HAP-1 (cell line): ENCODE measurements at regions of chr1 and their contacts with region 1.

Region 1: GRCh38 chr1:102191723-102192122 is 195.0 kb upstream of the OLFM3 start:
- DNase-seq: peak; percentile 67 to 80
- H3K4me3 ChIP-seq: no peak overlapping the region
- H3K4me1 ChIP-seq: no peaks in the 10 kb centered on the region
- H3K27me3 ChIP-seq: no peaks in the 10 kb centered on the region; the same call in 1 of the 2 replicates

Region 2: DNA sequence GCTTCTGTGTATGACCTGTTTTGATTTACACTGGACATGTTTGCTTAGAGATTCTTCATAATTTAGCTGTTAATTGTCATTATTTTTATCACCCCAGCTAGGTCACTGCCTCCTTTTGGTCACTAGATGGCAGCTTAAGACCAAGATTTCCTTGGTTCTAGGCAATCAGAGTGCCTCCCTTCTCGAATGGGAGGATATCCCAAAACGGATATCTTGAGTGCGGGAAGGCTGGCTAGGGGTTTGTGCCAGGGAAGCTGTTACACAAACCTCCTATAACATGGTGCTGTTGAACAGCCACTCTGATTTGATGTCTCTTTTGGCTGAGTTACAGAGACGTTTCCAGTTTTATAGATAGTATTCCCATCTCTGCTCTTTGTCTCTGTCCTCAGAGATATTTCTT is 671.4 kb before region 1 on chr1:
- in situ Hi-C with region 1: loop called (anchors 25 kb)
- DNase-seq: peak; percentile 60 to 62
- H3K4me3 ChIP-seq: no peak overlapping the region
- H3K4me1 ChIP-seq: no peaks in the 10 kb centered on the region
- H3K27me3 ChIP-seq: no peaks in the 10 kb centered on the region

Region 3: DNA sequence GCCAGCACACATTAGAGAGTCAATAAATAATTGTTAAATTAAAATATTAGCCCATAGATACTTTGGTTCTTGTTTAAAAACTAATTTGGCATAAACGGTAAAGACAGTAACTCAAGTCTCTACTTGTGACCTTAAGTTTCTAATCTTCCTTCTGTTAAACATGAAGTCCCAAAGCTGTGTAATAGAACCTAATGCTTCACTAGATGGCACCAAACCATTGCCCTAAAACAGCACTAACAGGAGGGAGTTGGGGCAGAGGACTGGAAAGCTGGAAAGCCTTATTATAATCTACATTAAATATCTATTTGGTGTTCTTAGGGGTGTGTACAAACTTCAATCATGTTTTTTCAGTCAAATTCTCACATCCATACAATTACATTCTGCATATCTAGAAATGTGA is 371.7 kb before region 1 on chr1:
- in situ Hi-C with region 1: loop called (anchors 25 kb)
- DNase-seq: peak; percentile 41 to 53
- H3K4me3 ChIP-seq: no peak overlapping the region
- H3K4me1 ChIP-seq: no peaks in the 10 kb centered on the region
- H3K27me3 ChIP-seq: no peaks in the 10 kb centered on the region

Region 4: DNA sequence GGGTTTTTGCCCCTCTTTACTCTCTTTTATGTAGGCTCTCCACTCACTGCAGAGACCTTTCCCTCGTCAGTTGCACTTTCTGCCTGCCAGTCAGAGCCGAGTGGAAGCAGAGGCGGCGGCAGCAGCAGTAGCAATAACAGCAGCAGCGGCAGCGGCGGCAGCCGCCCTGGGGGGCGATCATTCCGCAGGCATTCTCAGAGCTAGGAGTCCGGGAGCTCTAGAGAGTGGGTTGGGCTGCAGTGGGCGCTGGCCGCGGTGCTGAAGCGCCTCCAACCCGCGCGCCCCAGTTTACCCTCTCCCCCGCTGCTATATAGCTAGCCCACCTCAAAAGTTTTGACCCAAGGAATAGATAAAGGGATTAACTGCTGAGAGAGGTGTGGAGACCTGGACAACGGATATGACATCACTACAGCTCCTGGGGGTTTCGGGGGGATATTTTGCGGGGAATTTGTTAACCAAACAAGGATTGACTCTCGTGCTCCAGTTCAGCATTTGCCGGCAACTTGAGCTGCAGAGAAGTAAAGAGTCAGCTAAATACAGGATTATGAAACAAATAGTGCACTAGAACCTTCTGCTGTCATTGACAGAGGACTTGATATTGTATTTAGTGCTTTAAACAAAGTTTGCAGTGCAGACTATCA is 194.8 kb before region 1 on chr1 and contains the start of gene OLFM3:
- in situ Hi-C with region 1: loop called (anchors 25 kb)
- DNase-seq: peak; percentile 78 to 90
- H3K4me3 ChIP-seq: peak within 1 kb of the TSS; percentile 42
- H3K4me1 ChIP-seq: peaks cover 13% of the 10 kb centered on the region
- H3K27me3 ChIP-seq: no peaks in the 10 kb centered on the region